Activated naive CD8-positive, alpha-beta T cell treated with anti-CD3 and anti-CD28 coated beads, Interleukin-2, amount 10 ng/mL, durations not matched to agents 7 days and 5 days (primary cell): ENCODE measurements at regions of chr14 and their contacts with region 1.

Region 1: GRCh38 chr14:90383075-90383730 is 13.6 kb upstream of the CALM1 start:
- DNase-seq: peak; percentile 97
- ATAC-seq: peak; percentile 85
- H3K4me3 Mint-ChIP-seq: no peak overlapping the region
- H3K27ac Mint-ChIP-seq: no peak overlapping the region
- H3K4me1 Mint-ChIP-seq: peaks cover 13% of the 10 kb centered on the region
- H3K27me3 Mint-ChIP-seq: peaks cover 2% of the 10 kb centered on the region

Region 2: GRCh38 chr14:89954070-89955028 is 428.9 kb before region 1 on chr14 and contains the start of gene EFCAB11:
- POLR2A ChIA-PET with region 1: interaction called, 13 read pairs
- DNase-seq: peak; percentile 91
- ATAC-seq: peak; percentile 82
- H3K4me3 Mint-ChIP-seq: peak within 1 kb of the TSS; percentile 94
- H3K27ac Mint-ChIP-seq: peak within 1 kb of the TSS; percentile 87
- H3K4me1 Mint-ChIP-seq: peaks cover 28% of the 10 kb centered on the region
- H3K27me3 Mint-ChIP-seq: no peaks in the 10 kb centered on the region
- total RNA-seq, gene EFCAB11: 9.2 to 11.6 TPM

Region 3: DNA sequence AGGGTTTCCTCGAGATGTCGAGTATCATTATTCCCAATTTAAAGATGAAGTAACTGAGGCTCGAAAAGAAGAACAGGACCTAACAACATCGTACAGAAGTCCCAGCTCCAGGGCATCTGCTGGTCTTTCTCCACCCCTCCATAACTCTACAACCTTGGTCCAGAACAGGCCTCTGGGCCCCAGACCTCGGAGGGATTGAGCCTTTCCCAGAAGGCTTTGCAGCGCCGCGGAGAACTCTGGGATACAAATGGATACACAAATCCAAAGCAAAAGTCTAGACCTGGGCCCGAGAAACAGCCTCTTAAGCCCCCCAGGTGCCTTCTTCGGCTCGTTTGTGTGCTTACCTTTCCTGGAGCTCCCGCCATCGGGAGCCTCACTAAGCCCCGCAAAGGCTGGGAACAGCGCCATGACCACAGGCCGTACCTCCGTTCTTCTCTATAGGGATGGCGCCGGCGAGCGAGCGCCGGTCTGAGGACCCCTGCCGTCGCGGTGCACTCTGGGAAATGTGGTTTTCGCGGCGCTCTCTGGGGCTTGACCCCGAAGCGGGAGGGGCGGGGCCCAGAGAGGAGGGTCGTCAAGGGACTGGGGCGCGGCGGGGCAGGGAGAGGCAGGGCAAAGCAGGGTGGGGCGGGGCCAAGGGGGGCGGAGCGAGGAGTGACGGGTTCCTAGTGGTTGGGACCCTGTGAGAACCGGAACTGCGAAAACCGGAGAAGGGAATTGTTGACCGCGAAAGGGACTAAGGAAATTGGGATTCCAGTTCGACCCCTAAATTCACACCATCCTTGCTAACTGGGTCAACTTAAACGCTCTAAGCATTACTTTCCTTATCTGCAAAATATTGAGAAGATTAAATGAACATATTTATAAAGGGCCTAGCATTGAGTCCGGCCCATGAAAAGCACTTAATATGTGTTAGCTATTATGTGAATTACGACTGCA is 51.4 kb before region 1 on chr14 and contains the start of gene NRDE2:
- POLR2A ChIA-PET with region 1: interaction called, 12 read pairs
- DNase-seq: peak; percentile 97
- ATAC-seq: peak; percentile 96
- H3K4me3 Mint-ChIP-seq: peak within 1 kb of the TSS; percentile 94
- H3K27ac Mint-ChIP-seq: peak within 1 kb of the TSS; percentile 89
- H3K4me1 Mint-ChIP-seq: peaks cover 18% of the 10 kb centered on the region
- H3K27me3 Mint-ChIP-seq: peaks cover 21% of the 10 kb centered on the region
- total RNA-seq, gene NRDE2: 25.4 TPM

Region 4: DNA sequence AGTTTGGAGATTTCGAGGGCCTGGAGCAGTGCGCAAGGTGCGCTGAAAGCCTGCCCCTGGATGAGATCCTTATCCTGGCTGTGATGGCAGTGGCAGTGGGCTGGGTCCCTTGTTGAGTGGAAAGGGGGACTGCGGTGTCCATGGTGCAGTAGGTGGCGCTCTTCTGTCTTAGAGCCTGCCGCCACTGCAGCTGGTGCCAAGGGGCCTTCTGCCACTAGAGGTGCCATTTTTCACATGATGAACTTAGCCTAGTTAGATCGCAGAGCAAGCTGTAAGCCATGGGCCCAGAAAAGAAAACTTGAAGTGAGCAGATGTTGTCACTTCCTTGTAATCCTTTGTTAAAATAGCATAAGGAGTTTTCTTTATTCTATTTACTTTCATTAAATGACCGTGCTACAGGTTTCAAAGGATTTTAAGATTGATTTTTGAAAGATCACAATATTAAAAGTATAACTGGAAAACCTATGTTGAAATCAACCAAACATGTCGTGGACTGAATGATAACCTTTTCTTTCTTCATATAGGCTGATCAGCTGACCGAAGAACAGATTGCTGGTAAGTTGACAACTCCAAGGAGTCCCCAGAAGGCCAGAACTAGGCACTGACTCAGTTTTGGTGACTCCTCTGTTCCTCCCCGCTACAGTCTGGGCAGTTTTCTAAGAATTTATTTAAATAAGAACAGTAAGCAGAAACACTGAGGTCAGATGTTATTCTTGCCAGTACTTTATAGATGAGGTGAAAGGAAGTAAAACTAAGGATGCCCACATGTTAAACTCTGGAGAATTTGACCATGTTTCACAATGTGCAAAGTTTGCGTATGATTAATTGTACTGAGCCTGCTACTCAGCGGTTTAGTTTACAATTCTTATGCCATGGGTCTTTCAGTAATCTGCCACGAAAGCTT is 16.6 kb after region 1 on chr14:
- POLR2A ChIA-PET with region 1: interaction called, 386 read pairs
- DNase-seq: peak; percentile 76
- ATAC-seq: peak; percentile 35
- H3K4me3 Mint-ChIP-seq: peak overlapping the region; percentile 96
- H3K27ac Mint-ChIP-seq: peak overlapping the region; percentile 98
- H3K4me1 Mint-ChIP-seq: peaks cover 51% of the 10 kb centered on the region
- H3K27me3 Mint-ChIP-seq: no peaks in the 10 kb centered on the region

Region 5: GRCh38 chr14:90487031-90487430 is 103.8 kb after region 1 on chr14:
- POLR2A ChIA-PET with region 1: no interaction called
- DNase-seq: no peak
- ATAC-seq: no peak
- H3K4me3 Mint-ChIP-seq: no peak overlapping the region
- H3K27ac Mint-ChIP-seq: no peak overlapping the region
- H3K4me1 Mint-ChIP-seq: peaks cover 10% of the 10 kb centered on the region
- H3K27me3 Mint-ChIP-seq: peaks cover 3% of the 10 kb centered on the region